CD4-positive, alpha-beta T cell (primary cell): ENCODE measurements at regions of chr2 and their contacts with region 1.

Region 1: GRCh38 chr2:177164584-177165052 is 48.0 kb upstream of the HNRNPA3 start:
- DNase-seq: peak; percentile 63 to 88 (median 76)
- ATAC-seq: peak; percentile 75
- H3K4me3 ChIP-seq: peak overlapping the region; percentile 33
- H3K4me3 Mint-ChIP-seq: no peak overlapping the region
- H3K27ac ChIP-seq: no peak overlapping the region
- H3K27ac Mint-ChIP-seq: no peak overlapping the region
- H3K4me1 ChIP-seq: peaks cover 14% of the 10 kb centered on the region
- H3K4me1 Mint-ChIP-seq: peaks cover 16% of the 10 kb centered on the region
- H3K27me3 ChIP-seq: no peaks in the 10 kb centered on the region
- H3K27me3 Mint-ChIP-seq: no peaks in the 10 kb centered on the region
- CTCF ChIP-seq: peak; percentile 99

Region 2: GRCh38 chr2:177044671-177045070 is 119.9 kb before region 1 on chr2:
- CTCF ChIA-PET with region 1: no interaction called
- POLR2A ChIA-PET with region 1: no interaction called
- intact Hi-C with region 1: no loop called
- DNase-seq: no peak
- ATAC-seq: no peak
- H3K4me3 ChIP-seq: no peak overlapping the region
- H3K4me3 Mint-ChIP-seq: no peak overlapping the region
- H3K27ac ChIP-seq: no peak overlapping the region
- H3K27ac Mint-ChIP-seq: no peak overlapping the region
- H3K4me1 ChIP-seq: no peaks in the 10 kb centered on the region
- H3K4me1 Mint-ChIP-seq: no peaks in the 10 kb centered on the region
- H3K27me3 ChIP-seq: peaks cover 0 to 10% of the 10 kb centered on the region in 2 experiments
- H3K27me3 Mint-ChIP-seq: peaks cover 5% of the 10 kb centered on the region
- CTCF ChIP-seq: no peak

Region 3: GRCh38 chr2:177296040-177296439 is 131.4 kb after region 1 on chr2:
- CTCF ChIA-PET with region 1: interaction called, 67 read pairs
- POLR2A ChIA-PET with region 1: interaction called, 12 read pairs
- intact Hi-C with region 1: loop called (anchors 1 to 2 kb)
- DNase-seq: peak in 3 of 14 experiments; percentile 50 to 67 (median 65)
- ATAC-seq: peak; percentile 60
- H3K4me3 ChIP-seq: no peak overlapping the region
- H3K4me3 Mint-ChIP-seq: no peak overlapping the region
- H3K27ac ChIP-seq: no peak overlapping the region
- H3K27ac Mint-ChIP-seq: no peak overlapping the region
- H3K4me1 ChIP-seq: peaks cover 1% of the 10 kb centered on the region
- H3K4me1 Mint-ChIP-seq: peaks cover 21% of the 10 kb centered on the region
- H3K27me3 ChIP-seq: no peaks in the 10 kb centered on the region
- H3K27me3 Mint-ChIP-seq: no peaks in the 10 kb centered on the region
- CTCF ChIP-seq: peak; percentile 77

Region 4: GRCh38 chr2:177338177-177338721 is 173.6 kb after region 1 on chr2:
- CTCF ChIA-PET with region 1: interaction called, 58 read pairs
- POLR2A ChIA-PET with region 1: interaction called, 12 read pairs
- intact Hi-C with region 1: no loop called
- DNase-seq: no peak
- ATAC-seq: no peak
- H3K4me3 ChIP-seq: no peak overlapping the region
- H3K4me3 Mint-ChIP-seq: no peak overlapping the region
- H3K27ac ChIP-seq: no peak overlapping the region
- H3K27ac Mint-ChIP-seq: no peak overlapping the region
- H3K4me1 ChIP-seq: no peaks in the 10 kb centered on the region
- H3K4me1 Mint-ChIP-seq: no peaks in the 10 kb centered on the region
- H3K27me3 ChIP-seq: no peaks in the 10 kb centered on the region
- H3K27me3 Mint-ChIP-seq: no peaks in the 10 kb centered on the region
- CTCF ChIP-seq: no peak

Region 5: GRCh38 chr2:177552422-177553175 is 388.0 kb after region 1 on chr2:
- CTCF ChIA-PET with region 1: no interaction called
- POLR2A ChIA-PET with region 1: no interaction called
- intact Hi-C with region 1: loop called in 1 of 2 experiments (anchors 10 kb)
- DNase-seq: peak; percentile 80 to 97 (median 88)
- ATAC-seq: peak; percentile 91
- H3K4me3 ChIP-seq: peak overlapping the region; percentile 71
- H3K4me3 Mint-ChIP-seq: peak overlapping the region; percentile 99
- H3K27ac ChIP-seq: peak overlapping the region; percentile 93 to 99
- H3K27ac Mint-ChIP-seq: peak overlapping the region; percentile 98
- H3K4me1 ChIP-seq: peaks cover 13% of the 10 kb centered on the region
- H3K4me1 Mint-ChIP-seq: peaks cover 17% of the 10 kb centered on the region
- H3K27me3 ChIP-seq: no peaks in the 10 kb centered on the region
- H3K27me3 Mint-ChIP-seq: peaks cover 3% of the 10 kb centered on the region
- CTCF ChIP-seq: no peak

Region 6: GRCh38 chr2:177724398-177725287 is 560.0 kb after region 1 on chr2:
- CTCF ChIA-PET with region 1: interaction called, 4 read pairs
- POLR2A ChIA-PET with region 1: interaction called, 3 read pairs
- intact Hi-C with region 1: loop called in 1 of 2 experiments (anchors 5 kb)
- DNase-seq: peak; percentile 3 to 60 (median 11)
- ATAC-seq: no peak
- H3K4me3 ChIP-seq: no peak overlapping the region
- H3K4me3 Mint-ChIP-seq: no peak overlapping the region
- H3K27ac ChIP-seq: no peak overlapping the region
- H3K27ac Mint-ChIP-seq: no peak overlapping the region
- H3K4me1 ChIP-seq: no peaks in the 10 kb centered on the region
- H3K4me1 Mint-ChIP-seq: no peaks in the 10 kb centered on the region
- H3K27me3 ChIP-seq: peaks cover 5 to 7% of the 10 kb centered on the region in 2 experiments
- H3K27me3 Mint-ChIP-seq: peaks cover 37% of the 10 kb centered on the region
- CTCF ChIP-seq: peak; percentile 69

Region 7: GRCh38 chr2:177921726-177922125 is 757.1 kb after region 1 on chr2:
- CTCF ChIA-PET with region 1: no interaction called
- POLR2A ChIA-PET with region 1: no interaction called
- intact Hi-C with region 1: no loop called
- DNase-seq: no peak
- ATAC-seq: no peak
- H3K4me3 ChIP-seq: no peak overlapping the region
- H3K4me3 Mint-ChIP-seq: no peak overlapping the region
- H3K27ac ChIP-seq: no peak overlapping the region
- H3K27ac Mint-ChIP-seq: no peak overlapping the region
- H3K4me1 ChIP-seq: no peaks in the 10 kb centered on the region
- H3K4me1 Mint-ChIP-seq: no peaks in the 10 kb centered on the region
- H3K27me3 ChIP-seq: peaks cover 0 to 4% of the 10 kb centered on the region in 2 experiments
- H3K27me3 Mint-ChIP-seq: peaks cover 10% of the 10 kb centered on the region
- CTCF ChIP-seq: no peak